Testis (tissue), 5 donors: ENCODE measurements at regions of chr7 and their contacts with region 1.

Region 1: DNA sequence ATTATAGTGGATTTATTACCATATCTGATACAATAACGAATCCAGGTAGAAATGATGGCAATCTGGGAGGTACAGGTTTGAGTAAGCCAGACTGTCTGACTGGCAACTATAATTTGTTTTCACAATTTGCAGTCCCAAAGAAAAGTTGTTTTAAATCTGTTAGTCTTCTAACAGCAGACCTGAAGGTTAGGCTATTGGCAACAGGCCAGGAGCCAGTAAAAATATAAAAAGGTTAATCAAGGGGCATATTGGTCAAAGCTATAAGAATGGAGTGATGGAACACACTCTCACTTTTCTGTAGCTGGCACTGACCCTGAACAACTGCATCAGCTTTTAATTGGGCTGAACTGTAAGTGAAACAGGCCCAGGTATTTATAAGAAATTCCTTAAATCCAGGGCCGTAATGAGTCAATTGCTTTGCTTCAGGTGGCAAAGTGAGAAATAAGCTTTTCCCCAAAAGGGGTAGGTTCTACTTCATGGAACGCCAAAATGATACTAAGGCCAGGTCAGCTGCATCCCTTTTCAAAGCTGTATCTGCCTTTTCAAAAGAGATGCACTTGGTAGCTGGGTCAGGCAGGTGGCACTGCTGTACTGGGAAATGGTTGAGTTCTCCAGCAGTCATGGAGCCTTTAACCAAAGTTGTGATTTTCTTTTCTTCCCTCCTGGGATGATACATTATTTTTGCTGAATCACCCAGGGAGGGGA is 7.0 kb upstream of the GPR22 start:
- DNase-seq: peak; percentile 65
- H3K4me3 ChIP-seq: no peak overlapping the region
- H3K27ac ChIP-seq: no peak overlapping the region
- H3K4me1 ChIP-seq: no peaks in the 10 kb centered on the region
- H3K27me3 ChIP-seq: no peaks in the 10 kb centered on the region
- CTCF ChIP-seq: peak; percentile 29 to 70 (median 57)
- POLR2A ChIP-seq: no peak

Region 2: GRCh38 chr7:107622429-107622828 is 159.5 kb after region 1 on chr7:
- intact Hi-C with region 1: no loop called
- DNase-seq: no peak
- H3K4me3 ChIP-seq: no peak overlapping the region
- H3K27ac ChIP-seq: no peak overlapping the region
- H3K4me1 ChIP-seq: no peaks in the 10 kb centered on the region
- H3K27me3 ChIP-seq: no peaks in the 10 kb centered on the region
- CTCF ChIP-seq: no peak
- POLR2A ChIP-seq: no peak

Region 3: DNA sequence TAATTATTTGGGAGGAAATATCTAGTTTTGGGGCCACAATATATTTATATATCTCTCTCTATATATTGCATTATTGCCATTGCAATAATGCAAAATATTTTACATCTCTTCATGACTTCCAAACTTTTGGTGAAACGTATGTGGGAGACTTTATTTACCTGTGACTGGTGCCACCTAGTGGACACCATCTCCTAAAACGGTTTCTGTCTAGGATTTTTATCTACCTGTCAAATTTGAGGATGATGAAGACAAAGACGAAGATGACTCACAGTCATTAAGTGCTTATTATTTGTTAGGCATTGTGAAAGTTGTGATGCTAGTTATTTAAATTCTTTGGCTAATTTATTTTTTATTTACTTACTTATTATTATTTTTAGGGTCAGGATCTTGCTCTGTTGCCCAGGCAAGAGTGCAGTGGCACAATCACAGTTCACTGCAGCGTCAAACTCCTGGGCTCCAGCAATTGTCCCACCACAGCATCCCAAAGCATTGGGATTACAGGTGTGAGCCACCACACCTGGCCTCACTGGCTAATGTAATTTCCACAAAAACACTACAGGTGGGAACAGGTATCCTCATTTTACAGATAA is 262.4 kb after region 1 on chr7:
- intact Hi-C with region 1: loop called (anchors 10 kb)
- DNase-seq: peak; percentile 78
- H3K4me3 ChIP-seq: no peak overlapping the region
- H3K27ac ChIP-seq: no peak overlapping the region
- H3K4me1 ChIP-seq: no peaks in the 10 kb centered on the region
- H3K27me3 ChIP-seq: no peaks in the 10 kb centered on the region
- CTCF ChIP-seq: peak; percentile 79 to 82 (median 80)
- POLR2A ChIP-seq: no peak